ENCODE measurements at regions of chr1 and their contacts with region 1.

Region 1: GRCh38 chr1:41683681-41684500 is 199.4 kb upstream of the EDN2 start:
- DNase-seq: no peak
- ATAC-seq: peak in 3 of 4 donors; percentile 10 to 32 (median 17)
- H3K4me3 ChIP-seq: no peak overlapping the region
- H3K27ac ChIP-seq: no peak overlapping the region
- H3K4me1 ChIP-seq: peaks cover 6% of the 10 kb centered on the region
- H3K27me3 ChIP-seq: no peaks in the 10 kb centered on the region
- CTCF ChIP-seq: no peak

Region 2: GRCh38 chr1:41404308-41404761 is 279.6 kb before region 1 on chr1:
- intact Hi-C with region 1: no loop called
- DNase-seq: no peak
- ATAC-seq: peak in 2 of 4 donors; percentile 33 to 51
- H3K4me3 ChIP-seq: no peak overlapping the region
- H3K27ac ChIP-seq: no peak overlapping the region
- H3K4me1 ChIP-seq: peaks cover 7% of the 10 kb centered on the region
- H3K27me3 ChIP-seq: peaks cover 0 to 2% (median 0%) of the 10 kb centered on the region in 3 donors
- CTCF ChIP-seq: no peak

Region 3: DNA sequence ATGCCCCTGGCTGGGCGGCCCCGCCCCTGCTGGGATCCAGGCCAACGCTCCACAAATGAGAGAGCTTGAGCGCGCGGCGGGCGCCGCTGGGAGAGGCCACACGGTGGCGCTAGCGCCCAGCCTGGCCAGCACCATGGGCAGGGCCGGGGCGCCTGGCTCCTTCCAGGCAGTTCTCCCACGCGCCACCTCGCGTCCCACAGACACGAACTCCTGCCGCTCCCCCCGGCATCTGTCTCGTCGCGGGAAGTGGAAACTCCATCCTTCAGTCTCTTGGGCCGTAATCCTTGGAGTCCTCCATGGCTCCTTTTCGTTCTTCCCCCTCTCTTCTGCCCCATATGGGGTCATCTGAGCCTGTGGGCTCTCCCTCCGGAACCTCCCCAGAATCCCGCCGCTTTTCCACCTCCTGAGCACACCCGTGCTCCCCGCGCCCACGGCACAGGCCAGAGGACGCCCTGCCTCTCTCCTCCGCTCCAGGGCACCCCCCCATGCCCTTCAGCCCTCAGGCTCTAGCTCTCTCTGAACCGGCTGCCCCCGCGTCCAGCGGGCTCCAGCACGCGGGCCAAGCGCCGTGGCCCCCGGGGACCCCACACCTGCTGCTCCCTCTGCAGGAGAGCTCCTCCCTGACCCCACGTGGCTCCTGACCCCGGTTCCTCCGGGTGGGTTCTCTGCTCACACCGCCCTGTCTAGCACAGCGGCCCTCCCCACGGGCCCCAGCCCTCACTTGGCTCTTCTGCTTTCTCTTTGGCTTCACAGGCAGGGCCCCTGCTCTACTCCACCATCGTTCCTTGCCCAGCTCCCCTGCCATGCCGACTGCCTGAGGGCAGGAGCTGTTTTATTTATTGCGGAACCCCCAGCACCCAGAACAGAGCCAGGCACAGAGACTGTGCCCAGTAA is 167.5 kb before region 1 on chr1:
- intact Hi-C with region 1: no loop called
- DNase-seq: peak; percentile 91 to 95
- ATAC-seq: peak; percentile 96 to 98 (median 96)
- H3K4me3 ChIP-seq: peak overlapping the region; percentile 70
- H3K27ac ChIP-seq: peak overlapping the region; percentile 66
- H3K4me1 ChIP-seq: peaks cover 25% of the 10 kb centered on the region
- H3K27me3 ChIP-seq: no peaks in the 10 kb centered on the region
- CTCF ChIP-seq: peak; percentile 88

Region 4: GRCh38 chr1:41720861-41721410 is 37.0 kb after region 1 on chr1:
- intact Hi-C with region 1: loop called in 1 of 2 experiments (anchors 5 kb)
- DNase-seq: no peak
- ATAC-seq: no peak
- H3K4me3 ChIP-seq: no peak overlapping the region
- H3K27ac ChIP-seq: no peak overlapping the region
- H3K4me1 ChIP-seq: peaks cover 5% of the 10 kb centered on the region
- H3K27me3 ChIP-seq: no peaks in the 10 kb centered on the region
- CTCF ChIP-seq: no peak

Region 5: DNA sequence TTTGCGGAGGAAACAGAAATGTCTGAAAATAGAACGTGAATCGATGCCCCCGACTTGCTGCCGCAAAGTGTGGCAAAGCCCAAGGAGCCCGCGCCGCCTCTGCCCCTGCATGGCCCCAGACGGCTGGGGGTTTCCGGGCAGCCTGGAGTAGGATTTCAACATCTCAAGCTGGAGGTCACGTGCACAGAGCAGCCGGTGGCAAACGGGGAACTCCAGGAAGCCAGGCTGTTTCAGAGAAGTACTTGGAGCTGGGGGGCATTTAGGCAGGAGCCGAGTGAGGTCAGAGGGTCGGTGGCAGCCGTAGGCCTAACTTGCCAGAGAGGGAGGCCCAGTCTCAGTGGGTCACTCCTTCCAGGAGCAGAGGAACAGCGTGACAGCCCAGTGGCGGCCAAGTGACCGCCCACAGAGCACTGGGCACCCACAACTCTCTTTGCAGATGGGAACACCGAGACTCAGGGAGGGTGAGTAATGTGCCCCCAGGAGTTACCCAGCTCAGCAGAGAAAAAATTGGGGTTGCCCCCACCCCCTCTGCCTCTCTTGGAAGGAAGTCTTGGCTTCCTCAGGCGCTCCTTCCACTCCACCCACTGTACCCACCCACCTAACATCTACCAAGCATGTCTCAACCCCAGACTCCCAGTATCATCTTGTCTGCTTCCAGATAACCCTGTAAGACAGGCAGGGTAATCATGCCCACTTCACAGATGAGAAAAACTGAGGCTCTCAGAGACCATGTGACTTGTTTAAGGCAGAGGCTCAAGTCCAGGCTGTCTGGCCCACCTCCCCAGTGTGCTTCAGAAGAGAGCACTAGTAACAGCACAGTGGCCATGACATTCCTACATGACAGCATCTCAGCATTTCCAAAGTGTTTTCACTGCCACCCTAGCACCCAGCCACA is 55.4 kb after region 1 on chr1:
- intact Hi-C with region 1: no loop called
- DNase-seq: peak; percentile 77 to 90
- ATAC-seq: peak; percentile 89 to 97 (median 94)
- H3K4me3 ChIP-seq: peak overlapping the region; percentile 55
- H3K27ac ChIP-seq: peak overlapping the region; percentile 80
- H3K4me1 ChIP-seq: peaks cover 14% of the 10 kb centered on the region
- H3K27me3 ChIP-seq: no peaks in the 10 kb centered on the region
- CTCF ChIP-seq: no peak

Region 6: GRCh38 chr1:42070996-42071395 is 387.1 kb after region 1 on chr1:
- intact Hi-C with region 1: no loop called
- DNase-seq: no peak
- ATAC-seq: no peak
- H3K4me3 ChIP-seq: no peak overlapping the region
- H3K27ac ChIP-seq: no peak overlapping the region
- H3K4me1 ChIP-seq: no peaks in the 10 kb centered on the region
- H3K27me3 ChIP-seq: no peaks in the 10 kb centered on the region
- CTCF ChIP-seq: no peak